Dorsolateral prefrontal cortex (tissue), 120 donors: ENCODE measurements at regions of chr6 and their contacts with region 1.

Region 1: DNA sequence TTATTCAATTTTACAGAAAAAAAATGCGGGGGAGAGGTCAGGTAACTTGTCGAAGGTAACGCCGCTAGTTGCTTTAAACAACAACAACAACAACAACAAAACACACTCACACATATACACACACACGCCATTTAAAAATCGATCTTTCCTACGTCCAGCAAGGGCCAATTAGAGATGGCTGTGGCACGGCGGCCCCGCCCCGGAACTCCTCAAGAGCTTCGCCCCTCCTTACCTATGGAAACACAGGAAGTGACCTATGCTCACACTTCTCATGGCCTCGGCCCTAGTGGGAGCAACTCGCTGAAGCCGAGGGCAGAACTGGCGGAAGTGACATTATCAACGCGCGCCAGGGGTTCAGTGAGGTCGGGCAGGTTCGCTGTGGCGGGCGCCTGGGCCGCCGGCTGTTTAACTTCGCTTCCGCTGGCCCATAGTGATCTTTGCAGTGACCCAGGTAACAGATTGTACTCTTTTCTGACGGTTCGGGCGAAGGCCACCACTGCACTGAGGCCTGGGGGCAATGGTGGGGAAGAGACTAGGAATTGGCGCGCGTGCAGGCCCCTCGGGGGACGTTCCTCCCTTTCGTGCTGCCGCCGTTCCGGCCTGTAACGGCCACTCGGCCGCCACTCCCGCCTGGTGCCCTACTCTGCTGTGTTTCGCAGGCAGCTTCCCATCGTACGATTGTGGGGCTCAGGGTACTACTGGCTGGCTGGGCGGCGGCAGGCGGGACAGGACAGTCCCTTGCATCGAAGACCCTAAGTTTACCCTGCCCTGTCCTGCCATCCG is at the start of gene TBP:
- DNase-seq: peak; percentile 98 to 99 (median 99)
- H3K4me3 ChIP-seq: peak within 1 kb of the TSS; percentile 68 to 100 (median 94)
- H3K27ac ChIP-seq: peak within 1 kb of the TSS; percentile 70 to 98 (median 93)
- H3K27me3 ChIP-seq: no peaks in the 10 kb centered on the region
- CTCF ChIP-seq: peak in 27 of 56 donors; percentile 5 to 51 (median 37)
- total RNA-seq, gene TBP: 11.6 to 21.6 (median 16.2) TPM

Region 2: GRCh38 chr6:169701954-169702839 is 852.0 kb before region 1 on chr6 and contains the starts of genes C6orf120 and WDR27:
- intact Hi-C with region 1: loop called in 1 of 2 experiments (anchors 5 kb)
- DNase-seq: peak; percentile 91 to 97 (median 94)
- H3K4me3 ChIP-seq: peak within 1 kb of the TSS; percentile 68 to 99 (median 93)
- H3K27ac ChIP-seq: peak within 1 kb of the TSS; percentile 46 to 98 (median 91)
- H3K27me3 ChIP-seq: no peaks in the 10 kb centered on the region
- CTCF ChIP-seq: peak in 40 of 56 donors; percentile 8 to 61 (median 35)
- total RNA-seq, gene C6orf120: 20.7 to 34.2 (median 27.7) TPM
- total RNA-seq, gene WDR27: 35.8 to 79.9 (median 53.5) TPM

Region 3: DNA sequence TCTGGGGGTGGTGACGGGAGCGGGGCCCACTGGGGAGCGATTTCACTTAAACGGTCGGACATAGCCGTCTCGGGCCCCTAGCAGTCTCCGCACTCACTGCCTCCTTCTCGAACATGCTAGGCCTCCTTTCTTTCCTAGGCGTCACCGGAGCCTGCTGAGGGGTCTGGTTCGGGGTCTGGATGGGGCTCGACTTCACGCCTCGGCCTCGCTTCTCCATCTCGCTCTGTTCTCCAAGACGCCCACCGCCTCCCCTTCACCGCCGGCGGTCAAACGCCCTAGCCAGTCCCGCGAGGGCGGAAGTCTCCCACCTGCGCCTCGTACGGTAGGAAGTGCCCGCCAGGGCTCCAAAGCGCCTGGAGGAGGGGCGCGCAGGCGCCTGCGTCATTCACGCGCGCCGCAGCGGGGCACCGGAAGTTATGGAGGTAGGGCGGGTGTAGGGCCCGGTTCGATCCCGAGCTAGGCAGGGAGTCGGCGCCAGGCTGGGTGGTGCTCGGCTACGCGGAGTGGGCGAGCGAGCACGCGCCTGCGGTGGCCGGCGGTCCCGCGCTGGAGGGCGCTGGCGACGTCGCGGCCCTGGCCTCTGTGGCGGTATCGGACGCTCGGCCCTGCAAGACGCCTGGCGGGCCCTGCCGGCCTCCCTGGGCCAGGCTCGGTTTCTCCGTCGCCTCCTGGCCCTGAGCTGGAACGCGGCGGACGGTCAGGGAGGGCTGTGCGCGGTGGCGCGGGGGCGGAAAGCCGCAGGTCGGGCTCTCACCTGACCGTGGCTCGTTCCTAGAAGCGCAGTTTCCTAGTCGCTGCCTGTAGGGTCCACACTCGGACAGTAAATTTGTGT is 802.7 kb before region 1 on chr6 and contains the starts of genes DYNLT2 and ERMARD:
- intact Hi-C with region 1: loop called (anchors 1 kb)
- DNase-seq: peak; percentile 89 to 97 (median 93)
- H3K4me3 ChIP-seq: peak within 1 kb of the TSS; percentile 65 to 97 (median 88)
- H3K27ac ChIP-seq: peak within 1 kb of the TSS; percentile 76 to 99 (median 97)
- H3K27me3 ChIP-seq: no peaks in the 10 kb centered on the region
- CTCF ChIP-seq: peak in 51 of 56 donors; percentile 16 to 71 (median 43)
- total RNA-seq, gene DYNLT2: 1.4 to 6.6 (median 3.0) TPM
- total RNA-seq, gene ERMARD: 16.6 to 44.8 (median 27.1) TPM

Region 4: GRCh38 chr6:170306324-170307079 is 247.7 kb before region 1 on chr6 and contains the start of gene FAM120B:
- intact Hi-C with region 1: loop called in 1 of 2 experiments (anchors 5 kb)
- DNase-seq: peak; percentile 95 to 99 (median 97)
- H3K4me3 ChIP-seq: peak within 1 kb of the TSS; percentile 69 to 100 (median 95)
- H3K27ac ChIP-seq: peak within 1 kb of the TSS in 58 of 59 donors; percentile 21 to 94 (median 82)
- H3K27me3 ChIP-seq: no peaks in the 10 kb centered on the region
- CTCF ChIP-seq: peak in 23 of 56 donors; percentile 7 to 57 (median 26)
- total RNA-seq, gene FAM120B: 37.3 to 72.0 (median 55.7) TPM

Region 5: DNA sequence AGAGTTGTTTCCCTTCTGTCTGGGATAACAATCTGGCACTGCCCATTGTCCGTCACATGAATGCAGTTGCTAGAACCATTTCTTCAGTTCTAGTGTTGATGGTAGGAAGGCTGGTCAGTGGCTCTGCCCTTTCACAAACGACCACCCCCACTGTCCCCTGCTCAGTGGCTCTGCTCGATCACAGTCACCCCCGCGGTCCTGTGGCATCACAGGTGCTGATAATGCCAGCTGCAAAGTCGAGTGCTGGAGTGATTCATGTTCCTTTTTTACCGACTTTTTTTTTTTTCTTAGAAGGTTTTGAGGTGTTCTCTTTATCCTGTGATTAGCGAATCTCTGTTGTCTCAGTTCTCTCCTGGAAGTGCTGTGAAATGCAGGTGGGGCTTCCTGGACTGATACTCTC is 224.9 kb before region 1 on chr6:
- intact Hi-C with region 1: no loop called
- DNase-seq: no peak
- H3K4me3 ChIP-seq: no peak overlapping the region
- H3K27ac ChIP-seq: no peak overlapping the region
- H3K27me3 ChIP-seq: no peaks in the 10 kb centered on the region
- CTCF ChIP-seq: no peak

Region 6: GRCh38 chr6:170572704-170573466 is 18.7 kb after region 1 on chr6:
- intact Hi-C with region 1: no loop called
- DNase-seq: no peak
- H3K4me3 ChIP-seq: no peak overlapping the region
- H3K27ac ChIP-seq: no peak overlapping the region
- H3K27me3 ChIP-seq: no peaks in the 10 kb centered on the region
- CTCF ChIP-seq: no peak

Region 7: DNA sequence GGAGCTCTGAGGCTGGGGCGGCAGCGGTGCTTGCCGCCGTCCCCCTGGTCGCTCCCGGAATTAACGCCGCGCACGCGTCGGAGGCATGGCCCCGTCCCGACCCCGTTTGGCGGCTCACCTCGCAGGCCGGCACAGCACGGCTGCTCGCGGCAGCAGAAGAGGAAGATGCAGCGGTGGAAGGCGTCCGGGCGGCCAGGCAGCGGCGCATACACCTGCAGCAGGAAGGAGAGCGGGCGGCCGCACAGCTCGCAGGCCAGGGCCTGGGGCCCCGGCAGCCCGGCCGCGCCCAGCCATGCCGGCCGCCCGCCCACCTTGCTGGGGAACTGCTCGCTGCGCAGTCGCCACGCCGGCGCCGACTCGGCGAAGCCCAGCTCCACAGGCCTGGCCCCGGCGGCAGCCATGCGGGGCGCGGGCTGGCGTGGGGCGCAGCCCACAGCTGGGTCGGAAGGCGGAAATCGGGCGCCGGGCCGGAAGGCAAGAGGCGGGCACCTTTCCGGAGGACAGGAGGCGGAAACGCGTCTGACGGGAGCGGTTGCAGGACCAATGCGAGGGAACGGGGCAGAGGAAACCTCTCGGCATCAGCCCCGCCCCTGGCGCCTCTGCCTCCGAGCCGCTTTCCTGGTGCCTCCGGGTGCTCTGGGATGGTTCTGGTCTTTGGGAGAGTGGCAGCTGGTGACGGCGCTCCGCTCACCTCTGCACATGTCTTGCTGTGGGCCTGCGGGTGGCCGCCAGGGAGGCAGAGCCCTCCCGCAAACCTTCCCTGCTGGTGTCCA is 30.2 kb after region 1 on chr6 and contains the start of gene PDCD2:
- intact Hi-C with region 1: loop called (anchors 1 to 2 kb)
- DNase-seq: peak; percentile 75 to 96 (median 92)
- H3K4me3 ChIP-seq: peak within 1 kb of the TSS; percentile 62 to 100 (median 89)
- H3K27ac ChIP-seq: peak within 1 kb of the TSS; percentile 20 to 95 (median 84)
- H3K27me3 ChIP-seq: no peaks in the 10 kb centered on the region
- CTCF ChIP-seq: peak in 23 of 56 donors; percentile 9 to 44 (median 22)
- total RNA-seq, gene PDCD2: 18.2 to 38.8 (median 28.9) TPM